Activated CD4-positive, alpha-beta T cell treated with anti-CD3 and anti-CD28 coated beads for 36 hours (primary cell): ENCODE measurements at regions of chr15 and their contacts with region 1.

Region 1: GRCh38 chr15:98647774-98648653 is at the start of gene IGF1R:
- DNase-seq: peak; percentile 91
- ATAC-seq: peak; percentile 56
- H3K4me3 Mint-ChIP-seq: peak within 1 kb of the TSS; percentile 89
- H3K27ac Mint-ChIP-seq: peak within 1 kb of the TSS; percentile 91
- H3K4me1 Mint-ChIP-seq: peaks cover 21% of the 10 kb centered on the region
- H3K27me3 Mint-ChIP-seq: peaks cover 17% of the 10 kb centered on the region
- total RNA-seq, gene IGF1R: 26.3 to 43.7 TPM

Region 2: DNA sequence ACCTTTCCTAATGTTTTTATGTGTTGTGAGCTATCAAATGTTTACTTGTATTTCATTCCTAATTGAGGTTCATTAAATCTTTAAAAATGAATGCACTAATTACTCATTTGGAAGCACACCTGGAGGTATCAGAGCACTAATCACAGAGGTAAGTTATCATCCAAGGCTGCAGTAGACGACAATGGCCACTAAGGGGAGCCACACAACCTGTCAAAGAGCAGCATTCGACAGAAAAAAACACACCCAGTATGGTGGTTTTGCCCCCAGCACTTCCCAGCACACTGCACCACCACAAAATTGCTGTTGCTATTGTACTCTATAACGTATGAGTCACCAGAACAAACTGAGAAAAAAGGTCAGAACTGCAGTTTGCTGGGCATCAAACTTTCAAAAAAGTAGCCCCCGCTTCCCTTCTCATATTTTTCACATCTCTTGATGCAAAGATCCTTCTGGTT is 205.6 kb before region 1 on chr15:
- CTCF ChIA-PET with region 1: interaction called, 3 read pairs
- POLR2A ChIA-PET with region 1: no interaction called
- intact Hi-C with region 1: loop called in 1 of 2 experiments (anchors 1 kb)
- DNase-seq: peak; percentile 81
- ATAC-seq: peak; percentile 97
- H3K4me3 Mint-ChIP-seq: no peak overlapping the region
- H3K27ac Mint-ChIP-seq: no peak overlapping the region
- H3K4me1 Mint-ChIP-seq: peaks cover 3% of the 10 kb centered on the region
- H3K27me3 Mint-ChIP-seq: peaks cover 9% of the 10 kb centered on the region

Region 3: GRCh38 chr15:98581715-98582114 is 66.3 kb before region 1 on chr15:
- CTCF ChIA-PET with region 1: interaction called, 3 read pairs
- POLR2A ChIA-PET with region 1: no interaction called
- intact Hi-C with region 1: loop called in 1 of 2 experiments (anchors 2 kb)
- DNase-seq: no peak
- ATAC-seq: no peak
- H3K4me3 Mint-ChIP-seq: no peak overlapping the region
- H3K27ac Mint-ChIP-seq: no peak overlapping the region
- H3K4me1 Mint-ChIP-seq: peaks cover 11% of the 10 kb centered on the region
- H3K27me3 Mint-ChIP-seq: peaks cover 21% of the 10 kb centered on the region

Region 4: DNA sequence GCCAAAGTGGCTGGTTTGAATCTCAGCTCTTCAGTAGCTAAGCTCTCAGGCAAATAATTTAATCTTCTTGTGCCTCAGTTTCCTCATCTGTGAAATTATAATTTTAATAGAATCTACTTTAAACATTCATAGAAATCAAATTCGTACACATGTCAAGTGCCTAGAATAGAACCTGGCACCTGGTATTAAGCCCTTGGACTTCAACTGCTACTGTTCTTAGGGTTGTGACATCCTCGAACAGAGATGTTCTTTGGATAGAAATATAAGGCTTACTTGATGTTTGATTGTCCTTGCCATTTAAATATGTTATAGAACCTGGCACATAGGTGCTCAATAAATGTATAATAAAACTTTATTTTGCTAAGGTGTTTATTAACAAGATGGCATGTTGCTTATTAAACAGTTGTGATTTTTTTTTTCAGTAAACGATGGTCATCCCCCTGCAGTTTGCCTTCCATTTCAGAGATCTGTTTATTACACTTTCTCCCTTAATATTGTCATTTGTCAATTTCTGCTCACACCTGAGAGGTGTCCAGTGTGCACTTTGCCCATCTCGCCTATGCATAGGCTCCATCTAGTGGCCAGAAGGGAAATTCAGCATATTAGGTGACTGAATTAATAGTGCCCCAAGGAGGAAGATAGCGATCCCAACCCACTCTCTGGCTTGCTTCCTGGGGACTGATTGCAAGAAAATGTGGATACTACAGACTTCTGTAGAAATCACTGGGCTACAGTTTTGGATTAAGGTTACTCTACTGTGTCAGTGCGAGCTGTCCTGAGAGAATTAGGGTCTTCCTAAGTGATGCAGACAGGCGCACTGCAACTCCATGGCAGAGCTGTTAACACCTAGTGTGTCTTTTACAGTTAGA is 11.1 kb after region 1 on chr15:
- CTCF ChIA-PET with region 1: interaction called, 16 read pairs
- POLR2A ChIA-PET with region 1: no interaction called
- intact Hi-C with region 1: no loop called
- DNase-seq: peak; percentile 40
- ATAC-seq: peak; percentile 81
- H3K4me3 Mint-ChIP-seq: no peak overlapping the region
- H3K27ac Mint-ChIP-seq: no peak overlapping the region
- H3K4me1 Mint-ChIP-seq: peaks cover 41% of the 10 kb centered on the region
- H3K27me3 Mint-ChIP-seq: no peaks in the 10 kb centered on the region

Region 5: DNA sequence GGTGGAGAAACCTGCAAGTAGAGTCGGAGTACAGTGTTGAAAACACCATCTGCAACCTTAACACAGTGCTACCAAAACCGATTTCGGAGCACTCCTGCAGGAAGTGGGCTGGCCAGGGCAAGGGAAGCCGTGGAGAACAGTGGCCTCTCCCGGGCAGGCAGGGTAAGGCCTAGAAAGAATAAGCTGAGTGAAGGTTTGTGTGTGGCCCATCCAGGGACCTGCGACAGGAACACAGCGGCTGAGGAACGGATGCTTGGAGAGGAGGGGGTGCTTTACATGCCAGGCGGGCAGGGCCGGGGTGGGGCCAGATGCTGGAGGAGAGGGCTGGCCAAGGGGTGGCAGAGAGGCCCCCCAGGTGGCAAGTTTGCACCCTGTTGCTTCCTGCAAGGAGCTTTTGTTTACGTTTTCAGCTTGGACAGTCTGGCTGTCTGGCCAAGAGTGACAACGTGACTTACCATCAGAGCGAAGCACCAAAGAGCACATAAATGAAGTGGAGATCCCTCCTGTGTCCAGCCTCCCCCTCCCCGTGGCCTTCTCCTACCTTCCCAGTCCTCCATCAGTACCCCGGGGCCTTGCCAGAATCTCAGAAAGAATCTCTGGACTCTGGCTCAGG is 203.1 kb after region 1 on chr15:
- CTCF ChIA-PET with region 1: interaction called, 5 read pairs
- POLR2A ChIA-PET with region 1: interaction called, 3 read pairs
- intact Hi-C with region 1: loop called (anchors 1 kb)
- DNase-seq: peak; percentile 86
- ATAC-seq: peak; percentile 62
- H3K4me3 Mint-ChIP-seq: peak overlapping the region; percentile 86
- H3K27ac Mint-ChIP-seq: peak overlapping the region; percentile 94
- H3K4me1 Mint-ChIP-seq: peaks cover 51% of the 10 kb centered on the region
- H3K27me3 Mint-ChIP-seq: no peaks in the 10 kb centered on the region

Region 6: DNA sequence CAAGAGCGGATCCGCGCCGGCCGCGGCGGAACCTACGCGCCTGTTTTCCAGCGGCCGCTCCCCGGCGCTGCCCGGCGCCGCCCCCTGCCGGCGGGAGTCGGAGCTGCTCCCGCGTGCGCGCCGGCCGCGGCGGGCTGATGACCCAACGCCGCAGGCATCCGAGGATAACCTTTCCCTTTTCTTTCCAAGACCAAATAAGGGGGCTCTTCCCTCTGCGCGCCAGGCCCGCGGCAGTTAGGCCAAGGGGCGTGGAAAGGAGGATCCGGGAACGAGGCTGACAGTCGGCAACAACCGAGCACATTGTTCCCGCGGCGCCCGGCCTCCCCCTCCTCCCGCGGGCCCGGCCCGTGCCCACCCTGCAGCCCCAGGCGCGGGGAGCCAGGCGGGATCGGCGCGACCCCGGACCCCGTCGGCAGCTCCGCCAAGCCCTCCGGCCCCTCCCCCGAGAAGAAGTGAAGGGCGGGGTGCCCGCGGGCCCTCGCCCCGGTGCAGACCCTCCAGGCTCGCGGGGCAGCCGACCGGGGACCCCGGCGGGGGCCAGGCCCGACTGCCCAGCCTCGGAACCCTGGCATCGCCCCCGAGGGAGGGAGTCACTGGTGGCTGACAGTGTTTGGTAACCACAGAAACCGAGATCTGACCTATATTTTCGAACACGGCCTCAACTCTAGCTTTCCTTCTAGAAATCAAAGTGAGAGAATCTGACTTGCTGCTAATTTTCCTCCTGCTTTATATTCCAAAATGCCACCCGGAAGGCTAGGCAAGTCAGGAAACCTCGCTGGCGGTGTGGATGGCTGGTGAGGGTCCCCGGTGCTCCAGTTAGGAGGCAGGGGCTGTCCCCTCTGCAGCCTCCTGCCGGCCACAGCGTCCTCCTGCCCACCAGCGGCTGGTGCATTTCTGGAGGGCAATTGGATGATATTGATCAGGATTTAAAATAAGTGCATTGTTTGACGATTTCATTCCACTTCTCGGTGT is 411.3 kb after region 1 on chr15:
- CTCF ChIA-PET with region 1: no interaction called
- POLR2A ChIA-PET with region 1: no interaction called
- intact Hi-C with region 1: loop called in 1 of 2 experiments (anchors 2 kb)
- DNase-seq: peak; percentile 72
- ATAC-seq: peak; percentile 92
- H3K4me3 Mint-ChIP-seq: peak overlapping the region; percentile 53
- H3K27ac Mint-ChIP-seq: peak overlapping the region; percentile 60
- H3K4me1 Mint-ChIP-seq: peaks cover 6% of the 10 kb centered on the region
- H3K27me3 Mint-ChIP-seq: peaks cover 29% of the 10 kb centered on the region

Region 7: DNA sequence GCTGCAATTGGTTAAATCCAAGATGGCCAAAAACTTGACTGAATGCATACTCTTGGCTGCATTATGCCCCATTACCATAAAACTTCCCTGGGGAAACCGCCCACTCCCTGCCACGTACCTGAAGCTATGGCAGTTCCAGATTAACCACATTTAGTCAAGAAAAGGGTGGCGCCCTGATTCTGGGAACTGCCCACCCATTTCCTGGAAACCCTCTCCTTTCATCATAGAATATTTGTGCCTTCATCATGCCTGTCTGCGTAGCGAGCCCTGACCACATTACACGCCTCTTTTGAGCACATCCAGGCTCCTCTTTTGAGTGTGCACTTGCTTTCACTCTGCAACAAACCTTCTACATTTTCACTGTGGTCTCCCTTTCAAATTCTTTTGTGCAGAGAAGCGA is 1948.8 kb after region 1 on chr15:
- CTCF ChIA-PET with region 1: no interaction called
- POLR2A ChIA-PET with region 1: no interaction called
- intact Hi-C with region 1: loop called in 1 of 2 experiments (anchors 5 kb)
- DNase-seq: peak; percentile 96
- ATAC-seq: peak; percentile 82
- H3K4me3 Mint-ChIP-seq: peak overlapping the region; percentile 74
- H3K27ac Mint-ChIP-seq: peak overlapping the region; percentile 98
- H3K4me1 Mint-ChIP-seq: peaks cover 74% of the 10 kb centered on the region
- H3K27me3 Mint-ChIP-seq: no peaks in the 10 kb centered on the region